BJ (cell line): ENCODE measurements at regions of chr11 and their contacts with region 1.

Region 1: GRCh38 chr11:706957-707816 is 1.2 kb downstream of the EPS8L2 start:
- DNase-seq: no peak
- H3K4me3 ChIP-seq: peak overlapping the region; percentile 75
- H3K27me3 ChIP-seq: no peaks in the 10 kb centered on the region
- CTCF ChIP-seq: peak; percentile 13; the same call in 1 of the 2 replicates

Region 2: DNA sequence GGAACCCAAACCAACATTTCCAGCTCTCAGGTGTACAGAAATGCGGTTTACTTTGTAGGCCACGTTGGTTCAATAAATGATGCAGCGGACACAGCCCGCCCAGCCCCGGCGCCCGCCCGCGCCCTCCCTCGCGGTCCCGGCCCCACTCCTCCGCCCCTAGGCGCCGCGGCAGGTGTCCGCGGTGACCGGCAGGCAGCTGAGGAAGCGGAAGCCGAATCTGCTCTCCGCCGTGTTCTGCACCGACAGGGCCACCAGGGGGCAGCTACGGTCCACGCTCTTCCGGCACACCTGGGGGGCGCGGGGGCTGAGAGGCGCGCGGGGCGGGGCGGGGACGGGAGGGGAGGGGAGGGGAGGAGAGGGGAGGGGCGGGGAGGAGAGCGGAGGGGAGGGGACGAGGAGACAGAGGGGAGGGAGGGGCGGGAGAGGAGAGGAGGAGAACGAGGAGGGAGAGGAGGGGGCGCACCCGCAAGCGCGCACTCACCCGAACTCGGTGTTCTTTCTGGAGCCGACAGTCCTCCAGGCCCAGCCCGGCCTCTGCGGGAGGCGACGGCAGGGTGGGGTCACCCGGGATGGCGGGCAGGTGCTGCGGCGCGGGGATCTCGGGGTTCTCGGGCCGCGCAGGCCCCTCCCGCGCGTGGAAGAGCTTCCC is 152.2 kb before region 1 on chr11:
- CTCF ChIA-PET with region 1: no interaction called
- POLR2A ChIA-PET with region 1: no interaction called
- DNase-seq: no peak
- H3K4me3 ChIP-seq: peak overlapping the region; percentile 3; the same call in 1 of the 2 replicates
- H3K27me3 ChIP-seq: peaks cover 15% of the 10 kb centered on the region
- CTCF ChIP-seq: peak; percentile 57

Region 3: DNA sequence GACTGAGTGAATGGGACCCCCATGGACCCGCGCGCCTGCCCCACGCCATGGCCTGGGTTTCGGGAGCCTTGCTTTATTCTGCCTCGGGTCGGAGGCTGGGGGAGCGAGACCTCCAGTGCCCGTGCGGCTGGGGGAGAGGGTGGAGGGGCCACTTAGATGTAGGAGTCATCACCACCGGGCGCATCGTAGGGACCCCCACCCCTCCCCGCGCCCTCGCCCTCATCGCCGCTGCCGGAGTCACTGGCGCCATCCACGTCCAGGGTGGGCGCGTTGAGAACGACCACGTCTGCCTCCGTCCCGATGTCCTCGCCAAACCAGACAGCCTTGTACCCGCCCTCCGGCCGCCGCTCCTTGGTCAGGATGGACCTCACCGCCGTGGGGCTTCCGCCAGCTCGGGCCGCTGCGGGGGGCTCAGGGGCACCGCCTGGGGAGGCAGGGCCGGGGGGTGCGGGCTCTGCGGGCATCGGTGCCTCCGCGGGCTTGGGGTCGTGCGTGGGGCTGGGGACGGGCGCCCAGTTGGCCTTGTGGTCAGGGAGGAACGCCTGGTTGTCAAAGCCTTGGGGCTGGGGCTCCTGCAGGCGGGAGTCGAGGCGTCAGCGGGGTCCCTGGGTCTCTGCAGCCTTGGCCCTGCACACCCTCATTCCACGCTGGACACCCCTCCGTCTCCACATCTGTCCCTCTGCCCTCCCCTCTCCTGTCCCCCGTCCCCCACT is 89.8 kb before region 1 on chr11:
- CTCF ChIA-PET with region 1: no interaction called
- POLR2A ChIA-PET with region 1: interaction called, 10 read pairs
- DNase-seq: no peak
- H3K4me3 ChIP-seq: no peak overlapping the region
- H3K27me3 ChIP-seq: no peaks in the 10 kb centered on the region
- CTCF ChIP-seq: no peak

Region 4: DNA sequence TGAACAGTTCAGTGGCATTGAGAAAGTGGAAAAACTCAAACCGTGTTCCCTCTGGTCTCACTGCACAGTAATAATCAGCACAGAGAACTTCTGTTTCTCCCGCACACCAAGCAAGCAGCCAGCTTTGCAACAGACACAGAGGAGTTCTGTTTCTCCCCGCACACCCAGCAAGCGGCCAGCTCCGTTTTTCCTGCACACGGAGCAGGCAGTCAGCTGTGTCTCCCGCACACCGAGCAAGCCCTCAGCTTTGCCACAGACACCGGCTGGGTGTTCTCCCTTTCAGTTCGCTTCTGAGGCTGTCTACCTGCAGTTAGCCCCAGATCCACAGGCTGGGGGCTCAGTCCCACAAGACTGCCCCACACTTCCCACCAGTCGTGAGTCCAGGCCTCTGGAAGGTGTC is 30.2 kb after region 1 on chr11:
- CTCF ChIA-PET with region 1: no interaction called
- POLR2A ChIA-PET with region 1: no interaction called
- DNase-seq: no peak
- H3K4me3 ChIP-seq: no peak overlapping the region
- H3K27me3 ChIP-seq: peaks cover 1% of the 10 kb centered on the region
- CTCF ChIP-seq: no peak

Region 5: GRCh38 chr11:870127-870413 is 162.9 kb after region 1 on chr11:
- CTCF ChIA-PET with region 1: no interaction called
- POLR2A ChIA-PET with region 1: no interaction called
- DNase-seq: no peak
- H3K4me3 ChIP-seq: no peak overlapping the region
- H3K27me3 ChIP-seq: no peaks in the 10 kb centered on the region
- CTCF ChIP-seq: peak; percentile 25